ENCODE measurements at regions of chr9 and their contacts with region 1.

Region 1: GRCh38 chr9:71783120-71783530 is 14.8 kb upstream of the CEMIP2 start:
- DNase-seq: peak; percentile 86
- H3K4me3 Mint-ChIP-seq: peak overlapping the region; percentile 56
- H3K27ac Mint-ChIP-seq: peak overlapping the region; percentile 99
- H3K4me1 Mint-ChIP-seq: peaks cover 50% of the 10 kb centered on the region
- H3K27me3 Mint-ChIP-seq: no peaks in the 10 kb centered on the region

Region 2: DNA sequence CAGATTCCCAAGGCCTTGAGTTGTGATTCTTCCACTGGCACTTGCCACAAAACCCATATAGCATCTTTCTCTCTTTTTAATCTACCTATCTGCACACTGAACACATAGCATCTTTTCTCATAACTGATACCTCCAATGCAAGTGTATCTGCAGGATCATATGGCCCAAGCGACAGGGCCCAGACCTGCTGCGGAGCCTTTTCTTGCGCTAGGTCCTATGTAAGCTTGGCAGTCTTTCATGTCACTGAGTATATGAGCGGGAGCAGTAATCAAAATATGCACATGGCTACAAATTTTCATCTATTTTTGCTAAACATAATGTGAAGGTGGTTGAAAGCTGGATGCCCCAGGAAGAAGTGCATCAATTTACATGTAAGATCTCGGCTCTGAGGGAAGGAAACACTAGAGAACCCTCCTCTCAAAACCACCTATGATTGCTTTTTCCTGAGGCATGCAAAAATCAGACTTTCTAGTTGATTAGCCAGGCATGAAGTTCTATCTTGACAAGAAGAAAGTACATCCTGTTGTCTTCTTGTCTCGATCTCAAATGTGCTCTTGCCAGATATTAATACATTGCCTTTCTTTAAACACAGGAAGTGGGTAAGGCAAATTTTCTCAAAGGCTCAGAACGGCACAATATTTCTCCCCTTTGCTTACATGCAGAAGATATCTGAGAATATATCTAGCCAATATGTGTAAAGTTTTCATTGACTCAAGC is 12.1 kb after region 1 on chr9:
- CTCF ChIA-PET with region 1: interaction called, 14 read pairs
- POLR2A ChIA-PET with region 1: interaction called, 6 read pairs
- DNase-seq: peak; percentile 37
- H3K4me3 Mint-ChIP-seq: peak overlapping the region; percentile 39
- H3K27ac Mint-ChIP-seq: peak overlapping the region; percentile 98
- H3K4me1 Mint-ChIP-seq: peaks cover 51% of the 10 kb centered on the region
- H3K27me3 Mint-ChIP-seq: no peaks in the 10 kb centered on the region

Region 3: GRCh38 chr9:72041775-72042194 is 258.7 kb after region 1 on chr9:
- CTCF ChIA-PET with region 1: no interaction called
- POLR2A ChIA-PET with region 1: no interaction called
- DNase-seq: no peak
- H3K4me3 Mint-ChIP-seq: no peak overlapping the region
- H3K27ac Mint-ChIP-seq: no peak overlapping the region
- H3K4me1 Mint-ChIP-seq: peaks cover 2% of the 10 kb centered on the region
- H3K27me3 Mint-ChIP-seq: peaks cover 10% of the 10 kb centered on the region